Activated CD8-positive, alpha-beta T cell treated with anti-CD3 and anti-CD28 coated beads, Interleukin-2, amount 10 ng/mL, durations not matched to agents 7 days and 5 days (primary cell): ENCODE measurements at regions of chr5 and their contacts with region 1.

Region 1: GRCh38 chr5:141320225-141321169 is at the start of gene TAF7:
- DNase-seq: peak; percentile 95
- ATAC-seq: peak; percentile 94
- H3K4me3 Mint-ChIP-seq: peak within 1 kb of the TSS; percentile 99
- H3K27ac Mint-ChIP-seq: peak within 1 kb of the TSS; percentile 100
- H3K4me1 Mint-ChIP-seq: peaks cover 33% of the 10 kb centered on the region
- H3K27me3 Mint-ChIP-seq: peaks cover 2% of the 10 kb centered on the region
- total RNA-seq, gene TAF7: 65.5 to 67.0 TPM

Region 2: DNA sequence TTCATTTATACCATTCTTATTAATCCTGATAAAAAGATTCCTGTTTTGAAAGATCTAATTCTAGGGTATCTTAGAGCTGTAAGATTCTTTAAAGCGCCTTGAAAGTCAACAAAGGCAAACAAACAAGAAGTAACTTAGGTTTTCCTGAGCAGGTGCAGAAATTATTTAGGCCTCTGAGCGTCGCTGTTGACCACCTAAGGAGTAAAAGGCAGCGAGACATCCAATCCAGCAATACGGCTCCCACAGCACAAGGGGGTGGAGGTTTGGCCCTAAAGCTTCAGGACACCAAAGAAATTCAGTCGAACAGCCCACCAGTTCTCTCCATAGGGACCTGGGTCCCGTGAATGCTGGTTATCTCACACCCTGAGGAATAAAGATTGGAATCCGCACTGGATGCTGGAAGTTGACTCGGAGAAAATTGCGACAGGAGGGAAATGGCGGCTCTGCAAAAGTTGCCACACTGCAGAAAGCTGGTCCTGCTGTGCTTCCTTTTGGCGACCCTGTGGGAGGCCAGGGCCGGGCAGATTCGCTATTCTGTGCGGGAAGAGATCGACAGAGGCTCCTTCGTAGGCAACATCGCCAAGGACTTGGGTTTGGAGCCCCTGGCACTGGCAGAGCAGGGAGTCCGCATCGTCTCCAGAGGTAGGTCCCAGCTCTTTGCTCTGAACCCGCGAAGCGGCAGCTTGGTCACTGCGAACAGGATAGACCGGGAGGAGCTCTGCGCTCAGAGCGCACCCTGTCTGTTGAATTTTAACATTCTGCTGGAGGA is 18.2 kb after region 1 on chr5 and contains the start of gene PCDHGA2:
- CTCF ChIA-PET with region 1: interaction called, 33 read pairs
- POLR2A ChIA-PET with region 1: interaction called, 6 read pairs
- DNase-seq: no peak
- ATAC-seq: no peak
- H3K4me3 Mint-ChIP-seq: no peak within 1 kb of the TSS
- H3K27ac Mint-ChIP-seq: no peak within 1 kb of the TSS
- H3K4me1 Mint-ChIP-seq: no peaks in the 10 kb centered on the region
- H3K27me3 Mint-ChIP-seq: peaks cover 41% of the 10 kb centered on the region
- total RNA-seq, gene PCDHGA2: not detected

Region 3: GRCh38 chr5:141369994-141370848 is 49.7 kb after region 1 on chr5 and contains the start of gene PCDHGB3:
- CTCF ChIA-PET with region 1: interaction called, 17 read pairs
- POLR2A ChIA-PET with region 1: interaction called, 3 read pairs
- DNase-seq: peak; percentile 52
- ATAC-seq: peak; percentile 57
- H3K4me3 Mint-ChIP-seq: peak within 1 kb of the TSS; percentile 63
- H3K27ac Mint-ChIP-seq: no peak within 1 kb of the TSS
- H3K4me1 Mint-ChIP-seq: peaks cover 8% of the 10 kb centered on the region
- H3K27me3 Mint-ChIP-seq: peaks cover 45% of the 10 kb centered on the region
- total RNA-seq, gene PCDHGB3: 0.16 to 0.26 TPM